ENCODE measurements at regions of chr6 and their contacts with region 1.

Region 1: DNA sequence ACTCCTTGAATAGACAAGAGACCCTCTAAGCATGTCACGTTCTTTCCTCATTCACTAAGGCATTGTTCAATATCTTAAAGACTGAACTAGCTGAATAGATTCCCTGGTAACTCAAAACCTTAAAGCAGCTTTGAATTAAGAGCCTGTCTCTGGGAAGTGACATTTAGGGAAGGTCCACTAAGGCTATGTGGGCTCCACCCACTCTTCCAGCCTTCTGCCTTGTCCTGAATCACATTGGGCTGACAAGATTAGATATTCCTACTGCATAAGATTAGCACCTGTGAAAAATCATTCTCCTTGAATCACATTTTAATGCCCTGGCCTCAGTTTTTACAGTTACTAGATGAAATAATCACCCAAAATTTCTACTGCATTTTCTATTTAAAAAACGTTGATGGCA is 36.3 kb downstream of the CLIC5 start:
- DNase-seq: no peak
- H3K4me3 ChIP-seq: no peak overlapping the region
- H3K27ac ChIP-seq: no peak overlapping the region
- H3K4me1 ChIP-seq: no peaks in the 10 kb centered on the region
- H3K27me3 ChIP-seq: peaks cover 6% of the 10 kb centered on the region
- CTCF ChIP-seq: no peak

Region 2: GRCh38 chr6:45916692-45917091 is 62.6 kb before region 1 on chr6:
- CTCF ChIA-PET with region 1: no interaction called
- dilution Hi-C with region 1: no loop called
- in situ Hi-C with region 1: no loop called
- intact Hi-C with region 1: no loop called
- DNase-seq: no peak
- H3K4me3 ChIP-seq: no peak overlapping the region
- H3K27ac ChIP-seq: no peak overlapping the region
- H3K4me1 ChIP-seq: no peaks in the 10 kb centered on the region
- H3K27me3 ChIP-seq: no peaks in the 10 kb centered on the region
- CTCF ChIP-seq: no peak

Region 3: GRCh38 chr6:46011241-46012085 is 32.2 kb after region 1 on chr6:
- CTCF ChIA-PET with region 1: no interaction called
- dilution Hi-C with region 1: loop called (anchors 5 kb)
- in situ Hi-C with region 1: no loop called
- intact Hi-C with region 1: no loop called
- DNase-seq: no peak
- H3K4me3 ChIP-seq: no peak overlapping the region
- H3K27ac ChIP-seq: no peak overlapping the region
- H3K4me1 ChIP-seq: peaks cover 10% of the 10 kb centered on the region
- H3K27me3 ChIP-seq: peaks cover 26% of the 10 kb centered on the region
- CTCF ChIP-seq: no peak

Measured in mammary epithelial cell (primary cell).